Activated CD8-positive, alpha-beta memory T cell treated with anti-CD3 and anti-CD28 coated beads, Interleukin-2, amount 10 ng/mL, durations not matched to agents 7 days and 5 days (primary cell): ENCODE measurements at regions of chrX and their contacts with region 1.

Region 1: GRCh38 chrX:48937054-48937907 is 18.5 kb upstream of the PIM2 start:
- DNase-seq: peak; percentile 95
- ATAC-seq: peak; percentile 79
- H3K4me3 Mint-ChIP-seq: peak overlapping the region; percentile 51
- H3K27ac Mint-ChIP-seq: peak overlapping the region; percentile 97
- H3K4me1 Mint-ChIP-seq: peaks cover 79% of the 10 kb centered on the region
- H3K27me3 Mint-ChIP-seq: no peaks in the 10 kb centered on the region

Region 2: DNA sequence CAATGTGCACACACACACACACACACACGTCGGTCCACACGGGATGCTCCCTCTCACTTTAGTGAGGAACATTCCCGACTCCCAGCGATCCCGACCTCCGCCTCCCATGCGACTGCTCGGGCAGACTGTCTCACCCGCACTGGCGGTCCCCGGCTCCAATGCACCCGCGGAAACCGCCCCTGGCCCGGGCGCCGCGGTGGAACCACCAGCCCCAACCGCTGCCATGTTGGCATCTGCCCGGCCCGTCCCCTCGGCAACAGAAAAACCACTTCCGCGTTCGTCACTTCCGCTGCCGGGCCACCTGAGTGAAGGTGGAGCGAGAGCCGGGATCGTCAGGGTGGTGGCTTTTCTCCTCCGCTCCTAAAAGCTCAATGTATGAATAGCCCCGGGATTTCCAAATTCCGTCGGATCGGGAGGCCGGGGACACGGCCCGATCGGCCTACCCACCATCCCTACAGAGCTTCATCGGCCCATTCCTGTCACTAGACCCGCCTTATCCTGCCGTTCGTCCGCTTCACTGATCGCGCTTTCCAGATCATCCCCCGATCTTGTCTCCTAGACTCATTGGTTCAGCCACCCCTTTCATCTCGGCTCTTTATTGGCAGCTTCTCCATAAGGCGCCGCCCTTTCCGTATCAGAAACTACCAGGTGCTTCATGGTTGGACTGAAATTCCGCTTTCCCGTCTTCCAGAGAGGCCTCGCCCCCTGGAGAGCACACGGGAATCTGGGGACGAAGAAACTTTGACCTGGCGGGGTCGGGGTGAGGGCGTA is 25.7 kb before region 1 on chrX and contains the start of gene SLC35A2:
- CTCF ChIA-PET with region 1: interaction called, 10 read pairs
- DNase-seq: peak; percentile 92
- ATAC-seq: peak; percentile 78
- H3K4me3 Mint-ChIP-seq: peak within 1 kb of the TSS; percentile 96
- H3K27ac Mint-ChIP-seq: peak within 1 kb of the TSS; percentile 92
- H3K4me1 Mint-ChIP-seq: peaks cover 51% of the 10 kb centered on the region
- H3K27me3 Mint-ChIP-seq: peaks cover 3% of the 10 kb centered on the region
- total RNA-seq, gene SLC35A2: 13.0 to 21.0 TPM

Region 3: DNA sequence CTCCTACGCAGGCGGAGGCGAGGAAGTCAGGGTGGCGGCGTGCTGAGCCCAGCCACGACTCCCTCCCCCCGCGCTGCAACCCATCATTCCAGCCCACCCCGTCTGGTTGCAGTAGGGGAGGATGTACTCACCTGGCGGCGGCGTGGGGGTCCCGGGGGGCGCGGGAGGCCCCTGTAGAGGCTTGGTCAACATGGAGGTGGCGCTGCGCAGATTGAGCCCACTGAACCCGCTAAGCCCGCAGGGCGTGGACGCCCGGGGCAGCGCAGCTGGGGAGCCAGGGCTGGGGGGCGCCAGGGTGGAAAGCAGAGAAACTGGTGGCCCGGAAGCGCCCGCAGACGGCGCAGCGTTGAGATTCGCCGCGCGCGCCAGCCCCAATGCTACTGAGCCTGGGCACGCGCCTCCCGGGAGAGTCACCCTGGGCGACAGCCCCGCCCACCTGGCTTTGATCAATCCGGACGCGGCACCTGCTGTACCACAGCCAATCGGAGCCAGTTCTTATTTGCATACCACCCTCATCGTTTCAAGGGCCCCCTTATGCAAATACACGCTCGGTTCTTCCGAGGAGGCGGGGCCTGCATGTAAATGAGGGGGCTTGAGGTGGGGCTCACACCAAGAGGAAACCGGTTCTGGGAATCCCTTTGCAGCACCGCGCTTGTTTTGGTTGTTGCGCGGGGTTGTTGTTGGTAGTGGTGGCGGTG is 18.5 kb before region 1 on chrX and contains the start of gene PIM2:
- CTCF ChIA-PET with region 1: interaction called, 11 read pairs
- DNase-seq: peak; percentile 95
- ATAC-seq: peak; percentile 79
- H3K4me3 Mint-ChIP-seq: peak within 1 kb of the TSS; percentile 96
- H3K27ac Mint-ChIP-seq: peak within 1 kb of the TSS; percentile 90
- H3K4me1 Mint-ChIP-seq: peaks cover 58% of the 10 kb centered on the region
- H3K27me3 Mint-ChIP-seq: no peaks in the 10 kb centered on the region
- total RNA-seq, gene PIM2: 168 to 252 TPM

Region 4: DNA sequence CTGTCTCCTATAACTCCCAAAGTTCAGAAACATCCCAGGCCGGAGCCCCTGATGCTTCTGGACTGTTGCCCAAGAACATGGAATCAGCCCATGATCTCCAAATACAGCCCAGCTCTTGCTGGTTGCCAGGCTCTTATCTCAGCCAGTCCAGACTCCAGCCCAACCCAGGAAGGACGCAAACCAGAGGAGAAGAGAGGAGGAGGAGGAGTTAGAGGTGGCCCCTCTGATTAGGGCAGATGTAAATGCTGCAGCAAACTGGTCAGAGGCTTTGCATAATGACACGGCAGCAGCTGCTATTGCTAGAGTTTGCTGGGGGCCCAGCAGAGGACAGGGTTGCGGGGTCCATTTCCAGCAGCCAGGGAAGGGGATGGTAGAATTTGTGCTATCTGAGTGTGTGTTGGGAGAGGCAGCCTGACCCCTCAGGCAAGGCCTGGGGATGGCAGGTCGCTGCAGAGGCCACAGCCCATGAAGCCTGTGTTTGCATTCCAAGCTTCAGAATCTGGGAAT is 24.4 kb after region 1 on chrX:
- CTCF ChIA-PET with region 1: no interaction called
- DNase-seq: no peak
- ATAC-seq: no peak
- H3K4me3 Mint-ChIP-seq: no peak overlapping the region
- H3K27ac Mint-ChIP-seq: no peak overlapping the region
- H3K4me1 Mint-ChIP-seq: peaks cover 18% of the 10 kb centered on the region
- H3K27me3 Mint-ChIP-seq: no peaks in the 10 kb centered on the region

Region 5: DNA sequence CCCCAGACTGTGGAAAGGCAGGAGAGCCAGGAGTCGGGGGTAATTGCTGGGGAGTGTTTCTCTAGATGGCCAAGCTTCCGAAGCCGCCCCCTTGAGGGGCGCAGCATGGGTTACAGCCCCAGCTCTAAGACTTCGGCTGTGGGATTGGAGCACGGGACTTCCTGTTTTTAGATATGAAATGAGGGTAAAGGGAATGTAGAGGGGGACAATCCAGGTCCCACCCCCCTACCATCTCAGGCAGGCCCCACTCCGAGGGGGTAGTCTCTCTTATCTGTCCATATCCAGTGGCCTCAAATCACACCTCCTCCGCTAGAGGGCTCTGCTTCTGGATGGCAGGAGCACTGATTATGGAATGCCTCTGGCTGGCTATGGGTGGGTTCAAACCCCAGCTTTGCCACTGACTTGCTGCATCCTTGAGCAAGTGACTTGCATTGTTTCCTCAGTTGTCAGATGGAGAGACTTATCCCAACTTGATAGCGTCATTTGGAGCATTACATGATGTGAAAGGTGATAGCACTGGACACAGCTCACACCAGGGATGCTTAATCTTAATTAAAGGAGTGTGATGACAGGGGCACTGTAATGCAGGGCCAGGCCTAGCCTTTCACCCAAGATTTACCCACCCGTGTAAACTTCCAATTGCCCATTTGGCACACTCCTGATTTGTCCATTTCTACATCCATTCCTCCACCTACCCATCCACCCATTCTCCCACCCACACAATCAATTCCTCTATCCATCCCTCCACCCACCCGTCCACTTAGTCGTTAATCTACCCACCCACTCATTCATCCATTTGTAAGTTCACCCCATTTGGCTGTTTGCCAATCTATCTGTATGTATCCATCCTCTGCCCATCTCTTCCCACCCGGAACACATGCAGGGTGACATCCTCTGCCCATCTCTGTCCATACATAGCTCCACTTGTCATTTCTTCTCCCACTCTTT is 35.2 kb after region 1 on chrX:
- CTCF ChIA-PET with region 1: no interaction called
- DNase-seq: peak; percentile 45
- ATAC-seq: peak; percentile 51
- H3K4me3 Mint-ChIP-seq: no peak overlapping the region
- H3K27ac Mint-ChIP-seq: no peak overlapping the region
- H3K4me1 Mint-ChIP-seq: peaks cover 21% of the 10 kb centered on the region
- H3K27me3 Mint-ChIP-seq: no peaks in the 10 kb centered on the region